ENCODE measurements at regions of chr6 and their contacts with region 1.

Region 1: DNA sequence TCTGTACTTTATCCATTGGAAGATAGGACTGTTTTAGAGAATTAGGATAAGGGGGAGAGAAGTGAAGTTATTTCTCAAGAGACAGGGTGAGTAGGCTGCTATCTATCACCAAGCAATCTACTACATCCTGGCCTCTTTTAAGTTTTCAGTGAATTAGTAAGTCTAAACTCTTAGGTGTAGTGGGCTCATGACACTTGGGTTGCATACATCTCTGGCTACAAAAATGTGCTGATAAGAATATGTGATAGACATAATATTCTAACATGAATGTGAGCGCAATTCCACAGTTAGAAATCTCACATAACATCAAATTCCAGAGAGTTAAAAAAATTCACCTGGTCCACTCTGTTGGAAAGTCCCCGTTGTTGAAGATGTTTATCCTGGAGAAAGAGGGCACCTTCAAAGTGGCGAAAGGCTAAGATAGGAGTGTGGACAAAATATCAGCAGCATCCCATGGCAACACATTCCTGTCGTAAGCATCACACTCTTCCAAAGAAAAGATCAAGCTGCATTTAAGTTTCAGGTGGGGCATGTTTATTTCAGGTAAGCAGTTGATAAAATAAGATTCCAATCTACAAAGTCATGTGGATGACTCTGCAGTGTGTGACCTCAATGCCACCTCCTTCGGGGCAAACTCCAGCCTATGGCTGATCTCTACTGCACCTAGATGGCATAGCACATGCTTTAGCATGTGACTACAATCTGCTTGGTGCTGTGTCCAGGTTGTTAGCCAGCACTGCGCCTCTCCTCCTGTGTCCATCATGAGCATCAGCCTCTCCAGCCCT is 111.7 kb upstream of the NEDD9 start:
- DNase-seq: peak; percentile 85 to 98
- H3K4me3 ChIP-seq: no peak overlapping the region
- H3K27ac ChIP-seq: peak overlapping the region; percentile 82
- H3K4me1 ChIP-seq: peaks cover 45% of the 10 kb centered on the region
- H3K27me3 ChIP-seq: no peaks in the 10 kb centered on the region
- CTCF ChIP-seq: no peak

Region 2: GRCh38 chr6:11007715-11008608 is 336.2 kb before region 1 on chr6:
- CTCF ChIA-PET with region 1: no interaction called
- POLR2A ChIA-PET with region 1: no interaction called
- intact Hi-C with region 1: no loop called
- DNase-seq: peak in 1 of 2 experiments; percentile 57
- H3K4me3 ChIP-seq: no peak overlapping the region
- H3K27ac ChIP-seq: peak overlapping the region; percentile 41; the same call in 1 of the 2 replicates
- H3K4me1 ChIP-seq: peaks cover 28% of the 10 kb centered on the region
- H3K27me3 ChIP-seq: no peaks in the 10 kb centered on the region
- CTCF ChIP-seq: no peak

Region 3: GRCh38 chr6:11144393-11144851 is 199.7 kb before region 1 on chr6:
- CTCF ChIA-PET with region 1: no interaction called
- POLR2A ChIA-PET with region 1: no interaction called
- intact Hi-C with region 1: loop called (anchors 1 kb)
- DNase-seq: peak; percentile 59 to 82
- H3K4me3 ChIP-seq: no peak overlapping the region
- H3K27ac ChIP-seq: no peak overlapping the region
- H3K4me1 ChIP-seq: no peaks in the 10 kb centered on the region
- H3K27me3 ChIP-seq: no peaks in the 10 kb centered on the region
- CTCF ChIP-seq: peak; percentile 84

Region 4: DNA sequence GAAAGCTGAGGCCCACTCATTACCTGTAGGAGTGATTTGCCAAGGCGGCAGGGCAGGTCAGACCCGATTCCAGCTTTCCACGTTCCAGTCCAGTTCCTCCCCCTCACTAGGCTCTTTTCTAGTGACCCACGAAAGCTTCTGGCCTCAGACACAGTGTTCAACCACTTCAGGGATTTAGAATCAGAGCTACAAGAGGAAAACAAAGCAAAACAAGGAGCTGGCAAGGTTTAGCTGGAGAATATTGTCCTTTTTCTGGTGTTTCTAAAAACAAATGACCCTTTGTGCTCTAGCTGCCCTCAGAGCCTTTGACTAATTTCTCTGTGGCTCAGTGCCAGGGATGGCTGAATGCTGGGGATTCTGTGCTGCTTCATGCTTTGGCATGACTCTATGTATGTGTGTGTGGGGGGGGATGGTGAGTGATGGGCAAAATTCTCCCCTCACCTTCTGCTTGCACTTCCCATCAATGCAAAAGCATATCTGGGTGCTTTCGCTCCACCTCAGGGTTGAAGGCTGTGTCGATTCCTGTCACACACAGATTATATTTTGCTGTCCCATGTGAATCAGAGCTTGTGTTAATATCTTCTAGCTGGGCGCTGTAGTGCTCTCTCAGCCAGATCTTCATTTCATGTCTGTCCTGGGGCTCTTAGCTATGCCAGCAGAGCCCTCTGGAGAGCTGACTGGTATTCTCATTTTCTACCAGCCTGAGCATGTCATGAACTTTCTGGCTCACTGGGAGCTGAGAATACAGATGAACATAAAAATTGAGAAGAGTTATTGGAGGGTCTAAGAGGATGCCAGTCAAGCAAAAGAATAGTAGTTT is 92.4 kb before region 1 on chr6:
- CTCF ChIA-PET with region 1: no interaction called
- POLR2A ChIA-PET with region 1: no interaction called
- intact Hi-C with region 1: no loop called
- DNase-seq: peak in 1 of 2 experiments; percentile 36
- H3K4me3 ChIP-seq: no peak overlapping the region
- H3K27ac ChIP-seq: no peak overlapping the region
- H3K4me1 ChIP-seq: peaks cover 24% of the 10 kb centered on the region
- H3K27me3 ChIP-seq: no peaks in the 10 kb centered on the region
- CTCF ChIP-seq: no peak

Region 5: GRCh38 chr6:11296449-11297375 is 47.4 kb before region 1 on chr6:
- CTCF ChIA-PET with region 1: interaction called, 18 read pairs
- POLR2A ChIA-PET with region 1: no interaction called
- intact Hi-C with region 1: no loop called
- DNase-seq: no peak
- H3K4me3 ChIP-seq: no peak overlapping the region
- H3K27ac ChIP-seq: no peak overlapping the region
- H3K4me1 ChIP-seq: no peaks in the 10 kb centered on the region
- H3K27me3 ChIP-seq: no peaks in the 10 kb centered on the region
- CTCF ChIP-seq: no peak

Region 6: GRCh38 chr6:11414176-11414963 is 70.2 kb after region 1 on chr6:
- CTCF ChIA-PET with region 1: no interaction called
- POLR2A ChIA-PET with region 1: interaction called, 8 read pairs
- intact Hi-C with region 1: loop called (anchors 1 kb)
- DNase-seq: peak; percentile 69 to 94
- H3K4me3 ChIP-seq: peak overlapping the region; percentile 19; the same call in 1 of the 2 replicates
- H3K27ac ChIP-seq: peak overlapping the region; percentile 95
- H3K4me1 ChIP-seq: peaks cover 46% of the 10 kb centered on the region
- H3K27me3 ChIP-seq: no peaks in the 10 kb centered on the region
- CTCF ChIP-seq: no peak

Region 7: GRCh38 chr6:11434565-11435326 is 90.6 kb after region 1 on chr6:
- CTCF ChIA-PET with region 1: no interaction called
- POLR2A ChIA-PET with region 1: no interaction called
- intact Hi-C with region 1: loop called (anchors 1 kb)
- DNase-seq: peak; percentile 79 to 98
- H3K4me3 ChIP-seq: no peak overlapping the region
- H3K27ac ChIP-seq: peak overlapping the region; percentile 87
- H3K4me1 ChIP-seq: peaks cover 52% of the 10 kb centered on the region
- H3K27me3 ChIP-seq: no peaks in the 10 kb centered on the region
- CTCF ChIP-seq: no peak

Measured in PC-9 (cell line).